ENCODE measurements at regions of chr1 and their contacts with region 1.

Region 1: DNA sequence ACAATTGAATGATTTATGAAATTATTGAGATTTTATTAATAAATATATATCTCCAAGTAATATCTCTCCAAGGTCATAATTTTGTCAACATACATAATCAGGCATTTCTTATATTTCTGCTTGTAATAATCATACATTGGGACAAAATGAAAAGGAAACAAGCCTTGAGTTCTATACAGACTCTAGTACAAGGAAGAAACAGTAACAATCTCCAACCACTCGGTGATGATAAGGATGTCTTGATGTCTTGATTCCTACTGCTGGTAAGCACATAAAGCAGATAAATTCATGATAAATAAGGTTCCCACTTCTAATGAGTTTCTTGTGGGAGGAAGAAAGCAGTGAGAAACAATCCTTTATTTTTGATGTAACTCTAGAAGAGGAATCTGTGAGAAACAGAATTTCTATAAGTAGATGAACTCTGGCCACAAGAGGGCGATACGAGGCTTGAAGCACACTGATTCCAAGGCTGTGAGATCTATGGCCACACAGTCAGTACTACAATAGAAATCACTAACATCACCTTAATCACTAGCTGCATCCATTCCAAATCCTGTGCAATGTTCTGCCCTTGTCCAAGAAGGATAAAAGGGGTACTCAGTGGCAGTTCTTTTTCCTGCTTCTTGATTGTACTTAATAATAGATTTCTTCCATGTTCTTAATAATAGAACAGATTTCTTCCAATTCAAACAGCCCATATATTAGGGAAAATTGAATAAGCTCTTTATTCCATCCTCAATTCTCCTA is 41.4 kb upstream of the LRRC8B start:
- DNase-seq: peak; percentile 37 to 77 (median 67)
- ATAC-seq: peak; percentile 97
- H3K4me3 ChIP-seq: no peak overlapping the region
- H3K4me3 Mint-ChIP-seq: no peak overlapping the region
- H3K27ac ChIP-seq: no peak overlapping the region
- H3K27ac Mint-ChIP-seq: no peak overlapping the region
- H3K4me1 ChIP-seq: no peaks in the 10 kb centered on the region
- H3K4me1 Mint-ChIP-seq: peaks cover 0 to 18% (median 9%) of the 10 kb centered on the region in 7 donors
- H3K27me3 ChIP-seq: no peaks in the 10 kb centered on the region
- H3K27me3 Mint-ChIP-seq: peaks cover 0 to 5% (median 0%) of the 10 kb centered on the region in 5 donors

Region 2: GRCh38 chr1:89598450-89599331 is 115.5 kb after region 1 on chr1:
- CTCF ChIA-PET with region 1: interaction called, 4 read pairs
- POLR2A ChIA-PET with region 1: interaction called, 3 read pairs
- intact Hi-C with region 1: loop called (anchors 1 kb)
- DNase-seq: peak in 5 of 9 donors; percentile 19 to 43 (median 35)
- ATAC-seq: peak; percentile 82
- H3K4me3 ChIP-seq: no peak overlapping the region
- H3K4me3 Mint-ChIP-seq: peak overlapping the region in 8 of 10 donors; percentile 1 to 67 (median 48)
- H3K27ac ChIP-seq: no peak overlapping the region
- H3K27ac Mint-ChIP-seq: peak overlapping the region; percentile 51 to 99 (median 79)
- H3K4me1 ChIP-seq: peaks cover 17 to 55% of the 10 kb centered on the region in 2 donors
- H3K4me1 Mint-ChIP-seq: peaks cover 42 to 98% (median 92%) of the 10 kb centered on the region in 7 donors
- H3K27me3 ChIP-seq: no peaks in the 10 kb centered on the region
- H3K27me3 Mint-ChIP-seq: no peaks in the 10 kb centered on the region

Region 3: GRCh38 chr1:89622895-89623294 is 139.7 kb after region 1 on chr1:
- CTCF ChIA-PET with region 1: interaction called, 33 read pairs
- POLR2A ChIA-PET with region 1: interaction called, 3 read pairs
- intact Hi-C with region 1: loop called in 1 of 2 experiments (anchors 1 kb)
- DNase-seq: peak in 5 of 9 donors; percentile 29 to 58 (median 39)
- ATAC-seq: peak; percentile 71
- H3K4me3 ChIP-seq: no peak overlapping the region
- H3K4me3 Mint-ChIP-seq: peak overlapping the region in 3 of 10 donors; percentile 16 to 54 (median 31)
- H3K27ac ChIP-seq: no peak overlapping the region
- H3K27ac Mint-ChIP-seq: peak overlapping the region in 8 of 9 donors; percentile 35 to 98 (median 78)
- H3K4me1 ChIP-seq: peaks cover 9 to 22% of the 10 kb centered on the region in 2 donors
- H3K4me1 Mint-ChIP-seq: peaks cover 15 to 78% (median 61%) of the 10 kb centered on the region in 7 donors
- H3K27me3 ChIP-seq: no peaks in the 10 kb centered on the region
- H3K27me3 Mint-ChIP-seq: no peaks in the 10 kb centered on the region

Region 4: GRCh38 chr1:89953072-89953626 is 470.0 kb after region 1 on chr1:
- CTCF ChIA-PET with region 1: no interaction called
- POLR2A ChIA-PET with region 1: no interaction called
- intact Hi-C with region 1: loop called in 1 of 2 experiments (anchors 1 kb)
- DNase-seq: peak in 3 of 9 donors; percentile 5 to 24 (median 6)
- ATAC-seq: peak; percentile 60
- H3K4me3 ChIP-seq: no peak overlapping the region
- H3K4me3 Mint-ChIP-seq: no peak overlapping the region
- H3K27ac ChIP-seq: no peak overlapping the region
- H3K27ac Mint-ChIP-seq: peak overlapping the region in 3 of 9 donors; percentile 6 to 50 (median 25)
- H3K4me1 ChIP-seq: peaks cover 0 to 10% of the 10 kb centered on the region in 2 donors
- H3K4me1 Mint-ChIP-seq: peaks cover 10 to 39% (median 17%) of the 10 kb centered on the region in 7 donors
- H3K27me3 ChIP-seq: no peaks in the 10 kb centered on the region
- H3K27me3 Mint-ChIP-seq: peaks cover 0 to 1% (median 0%) of the 10 kb centered on the region in 5 donors

Region 5: GRCh38 chr1:89994805-89995597 is 511.8 kb after region 1 on chr1 and contains the start of gene ZNF326:
- CTCF ChIA-PET with region 1: no interaction called
- POLR2A ChIA-PET with region 1: no interaction called
- intact Hi-C with region 1: loop called in 1 of 2 experiments (anchors 2 kb)
- DNase-seq: peak; percentile 88 to 99 (median 93)
- ATAC-seq: peak; percentile 98
- H3K4me3 ChIP-seq: peak within 1 kb of the TSS; percentile 86
- H3K4me3 Mint-ChIP-seq: peak within 1 kb of the TSS; percentile 91 to 100 (median 99)
- H3K27ac ChIP-seq: peak within 1 kb of the TSS; percentile 85
- H3K27ac Mint-ChIP-seq: peak within 1 kb of the TSS; percentile 90 to 98 (median 96)
- H3K4me1 ChIP-seq: peaks cover 8 to 14% of the 10 kb centered on the region in 2 donors
- H3K4me1 Mint-ChIP-seq: peaks cover 28 to 47% (median 43%) of the 10 kb centered on the region in 7 donors
- H3K27me3 ChIP-seq: no peaks in the 10 kb centered on the region
- H3K27me3 Mint-ChIP-seq: peaks cover 0 to 7% (median 4%) of the 10 kb centered on the region in 5 donors
- total RNA-seq, gene ZNF326: 17.3 to 52.5 (median 23.5) TPM

Measured in naive thymus-derived CD4-positive, alpha-beta T cell (primary cell).